Breast epithelium (tissue), 4 donors: ENCODE measurements at regions of chr19 and their contacts with region 1.

Region 1: DNA sequence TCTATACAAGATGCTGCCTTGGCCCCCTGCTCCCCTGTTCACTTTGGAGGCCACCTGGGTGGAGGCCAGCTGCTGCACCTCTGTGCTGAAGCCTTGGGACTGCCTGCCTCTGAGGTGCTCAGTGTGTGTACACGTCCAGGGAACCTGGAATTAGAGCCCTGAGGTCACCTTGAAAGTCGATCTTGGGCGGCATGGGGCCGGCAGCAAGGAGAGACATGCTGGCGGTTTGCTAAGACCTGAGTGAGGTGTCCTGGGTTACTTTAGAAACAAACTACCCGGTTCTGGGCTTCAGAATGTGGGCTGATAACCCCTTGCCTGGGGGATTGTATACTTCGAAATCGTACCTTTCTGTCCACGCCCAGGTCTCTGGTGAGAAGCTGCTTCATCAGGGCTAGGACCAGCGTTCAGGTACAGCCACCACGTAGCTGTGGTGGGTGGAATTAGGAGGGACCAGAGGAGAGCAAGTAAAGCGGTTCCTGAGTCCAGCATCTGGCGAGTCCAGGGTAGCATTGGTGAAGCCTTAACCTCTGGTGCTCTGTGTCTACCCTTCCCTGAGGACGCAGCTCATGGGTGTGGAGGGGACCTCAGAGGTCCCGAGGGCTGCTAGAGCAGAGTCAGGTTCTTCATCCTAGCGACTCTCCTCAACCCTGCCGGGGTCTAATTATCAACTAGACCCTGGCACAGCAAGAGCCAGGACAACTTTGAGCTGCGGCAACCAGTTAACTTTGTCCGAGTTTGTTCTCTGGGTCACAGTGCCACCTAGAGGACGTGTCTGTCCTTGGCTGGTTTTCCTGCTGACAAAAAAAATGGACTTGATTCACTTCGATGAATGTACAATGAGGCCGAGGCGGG is 25.3 kb downstream of the TSSK6 start:
- DNase-seq: peak; percentile 70
- H3K4me3 ChIP-seq: peak overlapping the region in 2 of 3 donors; percentile 15 to 44
- H3K27ac ChIP-seq: peak overlapping the region; percentile 77 to 87
- H3K4me1 ChIP-seq: peaks cover 9 to 12% of the 10 kb centered on the region in 2 donors
- H3K27me3 ChIP-seq: no peaks in the 10 kb centered on the region
- CTCF ChIP-seq: peak; percentile 83 to 84 (median 84)
- POLR2A ChIP-seq: no peak

Region 2: DNA sequence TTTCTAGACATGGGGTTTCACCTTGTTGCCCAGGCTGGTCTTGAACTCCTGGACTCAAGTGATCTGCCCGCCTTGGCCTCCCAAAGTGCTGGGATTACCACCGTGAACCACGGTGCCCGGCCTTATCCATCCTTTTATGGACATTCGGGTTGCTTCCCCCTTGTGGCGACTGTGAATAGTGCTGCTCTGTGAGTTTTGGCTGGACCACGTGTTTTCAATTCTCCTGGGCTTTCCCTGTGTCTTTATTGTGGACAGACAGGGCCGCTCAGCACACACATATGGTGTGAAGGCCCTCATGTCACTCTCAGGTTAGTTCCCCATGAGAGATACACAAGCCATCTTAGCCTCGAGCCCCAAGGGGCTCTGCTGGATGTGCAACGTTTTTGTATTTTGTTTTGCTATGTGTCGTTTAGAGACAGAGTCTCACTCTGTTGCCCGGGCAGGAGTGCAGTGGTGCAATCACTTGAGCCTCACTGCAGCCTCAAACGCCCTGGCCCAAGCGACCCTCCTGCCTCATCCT is 128.9 kb before region 1 on chr19:
- intact Hi-C with region 1: loop called (anchors 10 kb)
- DNase-seq: peak; percentile 67 to 80
- H3K4me3 ChIP-seq: peak overlapping the region in 1 of 3 donors; percentile 2
- H3K27ac ChIP-seq: peak overlapping the region in 1 of 2 donors; percentile 33
- H3K4me1 ChIP-seq: no peaks in the 10 kb centered on the region
- H3K27me3 ChIP-seq: no peaks in the 10 kb centered on the region
- CTCF ChIP-seq: peak; percentile 81 to 85 (median 81)
- POLR2A ChIP-seq: no peak

Region 3: DNA sequence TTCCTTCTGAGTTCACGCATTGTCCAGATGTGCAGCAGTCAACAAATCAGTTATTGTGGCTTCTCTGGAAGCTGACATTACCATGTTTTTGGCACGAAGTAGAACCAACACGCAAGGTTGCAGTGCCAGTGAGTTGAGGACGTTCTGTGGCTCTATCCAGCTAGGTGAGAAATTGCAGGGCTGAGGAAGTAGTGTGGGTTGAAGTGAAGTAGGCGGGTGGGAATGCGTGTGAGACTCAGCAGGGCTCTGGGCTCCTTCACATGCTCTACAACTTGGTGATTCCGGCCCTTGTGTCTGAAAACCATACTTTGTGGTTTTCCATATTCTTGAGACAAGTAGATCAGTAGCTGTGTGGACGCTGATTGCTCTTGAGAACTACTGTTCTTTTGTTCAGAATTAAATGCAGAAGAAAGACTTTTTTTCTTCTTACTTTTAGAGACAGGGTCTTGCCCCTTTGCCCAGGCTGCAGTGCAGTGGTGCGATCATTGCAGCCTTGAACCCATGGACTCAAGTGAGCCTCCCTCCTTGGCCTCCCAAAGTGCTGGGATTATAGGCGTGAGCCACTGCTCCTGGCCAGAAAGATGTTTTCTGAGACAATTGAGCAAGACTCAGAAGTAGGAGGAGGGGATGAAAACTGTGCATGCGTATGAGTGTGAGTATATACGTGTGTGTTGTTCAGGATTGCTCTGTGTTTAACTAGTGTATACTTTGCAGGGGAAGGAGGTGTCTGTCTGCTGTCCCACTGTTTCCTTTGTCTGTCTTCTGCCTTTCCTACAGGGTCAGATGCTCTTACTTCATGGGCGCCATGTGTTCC is 38.4 kb before region 1 on chr19:
- intact Hi-C with region 1: no loop called
- DNase-seq: no peak
- H3K4me3 ChIP-seq: no peak overlapping the region
- H3K27ac ChIP-seq: no peak overlapping the region
- H3K4me1 ChIP-seq: no peaks in the 10 kb centered on the region
- H3K27me3 ChIP-seq: no peaks in the 10 kb centered on the region
- CTCF ChIP-seq: no peak
- POLR2A ChIP-seq: no peak

Region 4: DNA sequence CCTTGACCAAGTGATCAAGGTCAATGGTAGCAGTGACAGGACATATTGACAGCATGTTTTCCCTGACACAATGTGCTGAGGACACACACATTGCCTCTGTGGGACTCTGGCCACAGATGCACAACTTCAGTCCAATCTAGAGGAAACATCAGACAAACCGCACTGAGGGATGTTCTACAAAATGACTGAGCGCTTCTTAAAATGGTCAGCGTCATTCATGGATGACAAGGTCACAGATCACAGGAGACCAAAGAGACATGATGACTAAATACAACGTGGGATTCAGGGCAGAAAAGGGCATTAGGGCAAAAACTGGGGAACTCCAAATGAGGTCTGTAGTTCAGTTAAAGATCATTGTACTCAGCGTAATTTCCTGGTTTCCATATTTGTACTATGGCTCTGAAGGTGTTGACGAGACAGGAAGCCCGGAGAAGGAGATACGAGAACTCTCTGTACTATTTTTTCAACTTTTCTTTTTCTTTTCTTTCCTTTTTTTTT is 107.8 kb after region 1 on chr19:
- intact Hi-C with region 1: no loop called
- DNase-seq: no peak
- H3K4me3 ChIP-seq: no peak overlapping the region
- H3K27ac ChIP-seq: no peak overlapping the region
- H3K4me1 ChIP-seq: no peaks in the 10 kb centered on the region
- H3K27me3 ChIP-seq: no peaks in the 10 kb centered on the region
- CTCF ChIP-seq: no peak
- POLR2A ChIP-seq: no peak